ENCODE measurements at regions of chr10 and their contacts with region 1.

Region 1: DNA sequence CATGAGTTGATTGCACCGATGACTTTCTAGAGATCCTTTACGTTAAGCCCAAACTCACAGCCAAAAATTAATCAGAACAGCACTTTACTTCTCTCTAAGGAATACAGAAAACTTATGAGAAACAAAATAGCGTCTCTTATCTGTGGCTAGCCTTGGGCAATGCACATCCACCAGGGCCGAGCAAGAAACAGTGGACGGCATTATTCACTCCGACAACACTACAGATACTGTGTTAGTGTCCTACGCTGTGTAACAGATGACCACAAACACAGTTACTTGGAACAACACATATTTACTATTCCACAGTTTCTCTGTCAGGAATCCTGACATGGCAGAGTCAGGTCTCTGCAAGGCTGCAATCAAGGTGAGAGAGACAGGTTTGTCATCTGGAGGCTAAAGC is 598.3 kb upstream of the ADARB2 start:
- DNase-seq: no peak
- H3K4me3 ChIP-seq: no peak overlapping the region
- H3K27ac ChIP-seq: no peak overlapping the region
- H3K4me1 ChIP-seq: no peaks in the 10 kb centered on the region
- H3K27me3 ChIP-seq: no peaks in the 10 kb centered on the region
- CTCF ChIP-seq: no peak
- POLR2A ChIP-seq: no peak

Region 2: DNA sequence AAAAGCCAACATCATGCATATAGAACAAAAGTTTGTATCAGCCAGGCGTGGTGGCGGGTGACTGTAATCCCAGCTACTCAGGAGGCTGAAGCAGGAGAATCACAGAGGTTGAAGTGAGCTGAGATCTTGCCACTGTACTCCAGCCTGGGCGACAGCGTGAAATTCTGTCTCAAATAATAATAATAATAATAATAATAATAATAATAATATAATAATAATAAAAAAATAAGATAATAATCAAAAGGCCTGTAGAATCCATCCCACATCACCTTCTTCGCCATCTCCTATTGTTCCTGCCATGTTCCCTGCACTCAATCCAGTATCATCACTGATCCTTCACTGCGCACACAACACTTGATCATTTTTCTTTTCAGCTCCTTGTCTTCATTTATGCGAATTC is 21.0 kb after region 1 on chr10:
- intact Hi-C with region 1: loop called (anchors 1 kb)
- DNase-seq: no peak
- H3K4me3 ChIP-seq: no peak overlapping the region
- H3K27ac ChIP-seq: no peak overlapping the region
- H3K4me1 ChIP-seq: no peaks in the 10 kb centered on the region
- H3K27me3 ChIP-seq: no peaks in the 10 kb centered on the region
- CTCF ChIP-seq: no peak
- POLR2A ChIP-seq: no peak

Measured in vagina (tissue), 2 donors.